Mucosa of descending colon (tissue), 3 donors: ENCODE measurements at regions of chr2 and their contacts with region 1.

Region 1: DNA sequence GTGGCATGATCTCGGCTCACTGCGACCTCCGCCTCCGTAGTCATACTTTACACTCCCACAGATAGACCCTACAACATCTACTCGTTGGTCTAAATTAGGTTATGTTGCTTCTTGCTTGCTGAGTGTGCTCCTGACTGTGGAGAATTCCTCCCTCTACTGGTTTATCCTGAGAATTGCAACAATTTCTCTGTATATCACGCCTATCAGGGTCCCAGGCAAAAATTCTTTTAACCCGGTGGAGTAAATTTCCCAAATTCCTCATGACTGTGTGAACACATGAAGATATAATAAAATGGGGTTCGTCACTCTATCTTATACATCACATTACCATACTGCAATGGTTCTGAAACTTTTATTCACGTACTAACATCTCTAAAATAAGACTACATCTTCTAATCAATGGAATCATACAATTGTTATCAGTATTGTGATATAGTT is 156.7 kb downstream of the EVA1A start:
- DNase-seq: no peak
- ATAC-seq: peak; percentile 55
- H3K4me3 ChIP-seq: no peak overlapping the region
- H3K4me1 ChIP-seq: no peaks in the 10 kb centered on the region
- CTCF ChIP-seq: peak; percentile 42

Region 2: DNA sequence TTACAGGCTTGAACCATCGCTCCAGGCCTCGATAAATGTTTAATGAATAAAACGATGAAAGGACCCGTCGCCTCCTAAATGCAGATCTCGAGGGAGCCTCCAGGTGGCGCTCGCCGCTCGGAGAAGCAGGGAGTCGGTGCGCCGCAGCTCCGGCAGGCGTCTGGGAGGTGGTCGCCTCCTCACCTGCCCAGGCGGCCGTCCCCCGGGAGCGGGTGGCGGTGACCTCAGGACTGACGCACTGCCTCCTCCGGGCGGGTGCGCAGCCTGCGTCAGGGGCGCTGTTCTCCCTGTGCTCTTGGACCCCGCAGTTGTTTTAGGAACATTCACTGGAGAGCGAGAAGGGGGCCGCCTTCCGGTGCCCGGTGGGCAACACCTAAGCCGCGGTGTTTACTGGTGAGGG is 484.2 kb before region 1 on chr2:
- intact Hi-C with region 1: loop called (anchors 5 to 10 kb)
- DNase-seq: peak; percentile 70 to 81 (median 72)
- ATAC-seq: peak; percentile 80
- H3K4me3 ChIP-seq: no peak overlapping the region
- H3K4me1 ChIP-seq: no peaks in the 10 kb centered on the region
- CTCF ChIP-seq: peak; percentile 68